CD14-positive monocyte (primary cell): ENCODE measurements at regions of chr9 and their contacts with region 1.

Region 1: GRCh38 chr9:134704498-134704897 is 62.9 kb downstream of the COL5A1 start:
- DNase-seq: no peak
- H3K4me3 ChIP-seq: no peak overlapping the region
- H3K4me3 Mint-ChIP-seq: no peak overlapping the region
- H3K27ac ChIP-seq: no peak overlapping the region
- H3K27ac Mint-ChIP-seq: no peak overlapping the region
- H3K4me1 ChIP-seq: no peaks in the 10 kb centered on the region
- H3K4me1 Mint-ChIP-seq: no peaks in the 10 kb centered on the region
- H3K27me3 ChIP-seq: no peaks in the 10 kb centered on the region
- H3K27me3 Mint-ChIP-seq: peaks cover 9 to 18% (median 11%) of the 10 kb centered on the region in 3 donors
- CTCF ChIP-seq: no peak

Region 2: GRCh38 chr9:135410831-135411473 is 706.5 kb after region 1 on chr9:
- intact Hi-C with region 1: loop called (anchors 5 kb)
- DNase-seq: no peak
- H3K4me3 ChIP-seq: no peak overlapping the region
- H3K4me3 Mint-ChIP-seq: no peak overlapping the region
- H3K27ac ChIP-seq: no peak overlapping the region
- H3K27ac Mint-ChIP-seq: no peak overlapping the region
- H3K4me1 ChIP-seq: peaks cover 0 to 5% of the 10 kb centered on the region in 2 donors
- H3K4me1 Mint-ChIP-seq: no peaks in the 10 kb centered on the region
- H3K27me3 ChIP-seq: no peaks in the 10 kb centered on the region
- H3K27me3 Mint-ChIP-seq: peaks cover 5 to 59% (median 13%) of the 10 kb centered on the region in 3 donors
- CTCF ChIP-seq: no peak